HEK293 (cell line): ENCODE measurements at regions of chr15 and their contacts with region 1.

Region 1: GRCh38 chr15:75801859-75802593 is 41.2 kb upstream of the UBE2Q2 start:
- H3K4me3 ChIP-seq: no peak overlapping the region
- H3K27ac ChIP-seq: no peak overlapping the region
- H3K4me1 ChIP-seq: no peaks in the 10 kb centered on the region
- CTCF ChIP-seq: peak; percentile 92

Region 2: DNA sequence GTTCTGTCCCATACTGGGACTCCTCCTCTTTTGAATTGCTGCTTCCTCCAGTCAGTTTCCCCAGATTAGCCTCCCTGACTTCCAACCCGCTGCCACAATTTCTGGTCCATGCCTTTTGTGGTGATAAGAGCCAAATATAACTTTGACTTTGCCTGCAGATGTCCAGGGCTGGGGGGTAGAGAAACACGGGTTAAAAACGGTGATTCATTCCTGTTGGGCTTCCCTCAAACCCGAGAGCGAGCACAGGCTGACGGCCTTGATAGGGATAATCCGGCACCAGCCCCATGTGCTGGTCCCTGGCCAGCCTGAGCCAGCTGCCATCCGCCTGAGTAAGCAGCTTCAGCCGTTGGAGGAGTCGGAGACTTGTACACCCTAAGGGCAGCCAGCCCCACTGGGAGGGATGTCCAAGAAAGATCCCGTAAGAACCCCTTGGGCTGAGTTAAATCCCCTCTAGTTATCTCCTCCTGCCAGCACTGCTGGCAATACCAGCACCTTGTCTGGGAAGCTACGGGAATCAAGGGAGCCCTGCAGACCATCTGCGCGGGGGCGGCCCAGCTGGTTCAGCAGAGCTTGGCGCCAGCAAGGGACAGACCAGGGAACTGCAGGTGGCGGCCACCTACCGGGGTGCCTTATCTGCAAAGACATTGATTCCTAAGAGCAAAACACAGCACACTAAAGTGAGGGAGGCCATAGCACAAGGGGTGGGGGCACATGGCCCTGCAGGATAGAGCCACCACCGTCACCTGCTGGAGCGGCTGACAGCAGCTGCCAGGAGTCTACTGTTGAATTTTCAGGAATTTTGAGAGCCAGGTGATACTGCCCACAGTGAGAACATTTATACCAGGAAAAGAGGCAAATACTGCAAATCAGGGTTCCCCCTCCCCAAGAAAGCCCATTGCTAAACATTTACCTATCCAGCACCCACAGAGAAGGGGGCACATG is 107.5 kb before region 1 on chr15:
- CTCF ChIA-PET with region 1: interaction called, 20 read pairs
- POLR2A ChIA-PET with region 1: no interaction called
- H3K4me3 ChIP-seq: no peak overlapping the region
- H3K27ac ChIP-seq: peak overlapping the region; percentile 33; the same call in 1 of the 2 replicates
- H3K4me1 ChIP-seq: peaks cover 4% of the 10 kb centered on the region
- CTCF ChIP-seq: peak; percentile 93

Region 3: GRCh38 chr15:75732809-75733451 is 69.1 kb before region 1 on chr15:
- CTCF ChIA-PET with region 1: interaction called, 53 read pairs
- POLR2A ChIA-PET with region 1: no interaction called
- H3K4me3 ChIP-seq: no peak overlapping the region
- H3K27ac ChIP-seq: no peak overlapping the region
- H3K4me1 ChIP-seq: no peaks in the 10 kb centered on the region
- CTCF ChIP-seq: peak; percentile 83

Region 4: DNA sequence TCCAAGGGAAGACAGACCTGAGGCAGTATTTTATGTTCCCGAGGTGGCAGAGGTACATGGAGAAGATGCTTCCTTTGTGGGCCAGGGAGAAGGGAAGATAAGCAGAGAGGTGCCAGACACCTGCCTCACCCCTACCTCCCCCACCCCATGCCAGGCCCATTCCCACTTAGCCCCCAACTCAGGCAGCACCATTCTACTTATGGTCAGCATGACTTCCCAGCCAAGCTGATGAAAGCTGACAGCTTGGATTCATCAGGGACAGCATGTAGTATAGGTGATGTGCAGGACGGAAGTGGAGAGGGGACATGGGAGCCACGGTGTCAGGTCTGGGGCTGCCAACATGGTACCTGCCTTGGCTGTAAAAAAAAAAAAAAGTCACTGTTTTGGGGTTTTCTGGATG is 31.9 kb before region 1 on chr15:
- CTCF ChIA-PET with region 1: interaction called, 10 read pairs
- POLR2A ChIA-PET with region 1: no interaction called
- H3K4me3 ChIP-seq: no peak overlapping the region
- H3K27ac ChIP-seq: no peak overlapping the region
- H3K4me1 ChIP-seq: no peaks in the 10 kb centered on the region
- CTCF ChIP-seq: no peak

Region 5: DNA sequence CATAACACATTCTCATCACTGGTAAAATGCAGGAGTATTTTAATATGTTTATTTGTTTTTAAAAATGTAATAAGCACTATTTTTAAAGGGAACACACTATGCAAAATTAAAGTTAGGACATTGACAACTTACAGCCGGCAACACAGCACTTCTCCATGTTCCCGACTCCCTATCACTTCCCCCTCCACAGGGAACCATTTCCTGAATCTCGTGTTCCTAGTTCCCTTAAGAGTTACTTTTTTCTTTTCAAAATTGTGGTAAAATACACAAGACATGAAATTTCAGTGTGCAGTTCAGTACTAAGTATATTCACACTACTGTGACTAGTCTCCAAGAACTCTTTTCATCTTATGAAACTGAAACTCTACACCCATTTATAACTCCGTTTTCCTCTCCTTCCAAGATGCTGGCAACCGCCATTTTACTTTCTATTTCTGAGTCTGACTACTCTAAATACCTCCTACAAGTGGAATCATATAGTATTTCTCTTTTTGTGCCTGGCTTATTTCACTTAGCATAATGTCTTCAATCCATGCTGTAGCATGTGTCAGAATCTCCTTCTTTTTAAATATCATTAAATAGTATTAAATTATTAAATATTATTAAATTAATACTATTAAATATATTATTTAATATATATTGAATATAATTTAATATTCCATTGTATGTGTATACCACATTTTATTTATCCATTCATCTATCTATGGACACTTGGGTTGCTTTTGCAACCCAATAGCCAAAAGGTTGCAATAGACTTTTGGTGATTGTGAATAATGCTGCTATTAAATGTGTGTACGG is 15.3 kb after region 1 on chr15:
- CTCF ChIA-PET with region 1: interaction called, 22 read pairs
- POLR2A ChIA-PET with region 1: no interaction called
- H3K4me3 ChIP-seq: no peak overlapping the region
- H3K27ac ChIP-seq: no peak overlapping the region
- H3K4me1 ChIP-seq: no peaks in the 10 kb centered on the region
- CTCF ChIP-seq: no peak

Region 6: DNA sequence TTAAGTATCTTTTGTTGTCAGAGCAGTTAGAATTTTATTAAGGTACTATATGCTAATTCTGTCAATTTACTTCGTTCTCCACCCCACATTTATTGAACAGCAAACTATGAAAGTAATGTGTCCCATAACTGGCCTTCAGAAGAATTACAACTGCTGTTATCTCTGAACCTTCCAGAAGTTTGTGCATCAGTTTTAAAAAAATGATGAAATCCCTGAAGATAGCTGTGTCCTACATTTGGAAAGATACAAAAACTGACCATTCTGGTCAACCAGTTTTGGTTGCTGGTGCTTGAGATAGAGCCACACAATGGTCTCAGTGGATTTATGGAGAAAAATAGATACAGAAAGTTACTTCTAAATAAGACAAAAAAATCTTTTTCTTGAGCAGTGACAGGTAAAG is 47.1 kb after region 1 on chr15:
- CTCF ChIA-PET with region 1: no interaction called
- POLR2A ChIA-PET with region 1: no interaction called
- H3K4me3 ChIP-seq: no peak overlapping the region
- H3K27ac ChIP-seq: no peak overlapping the region
- H3K4me1 ChIP-seq: peaks cover 38% of the 10 kb centered on the region
- CTCF ChIP-seq: no peak